ENCODE measurements at regions of chr2 and their contacts with region 1.

Region 1: DNA sequence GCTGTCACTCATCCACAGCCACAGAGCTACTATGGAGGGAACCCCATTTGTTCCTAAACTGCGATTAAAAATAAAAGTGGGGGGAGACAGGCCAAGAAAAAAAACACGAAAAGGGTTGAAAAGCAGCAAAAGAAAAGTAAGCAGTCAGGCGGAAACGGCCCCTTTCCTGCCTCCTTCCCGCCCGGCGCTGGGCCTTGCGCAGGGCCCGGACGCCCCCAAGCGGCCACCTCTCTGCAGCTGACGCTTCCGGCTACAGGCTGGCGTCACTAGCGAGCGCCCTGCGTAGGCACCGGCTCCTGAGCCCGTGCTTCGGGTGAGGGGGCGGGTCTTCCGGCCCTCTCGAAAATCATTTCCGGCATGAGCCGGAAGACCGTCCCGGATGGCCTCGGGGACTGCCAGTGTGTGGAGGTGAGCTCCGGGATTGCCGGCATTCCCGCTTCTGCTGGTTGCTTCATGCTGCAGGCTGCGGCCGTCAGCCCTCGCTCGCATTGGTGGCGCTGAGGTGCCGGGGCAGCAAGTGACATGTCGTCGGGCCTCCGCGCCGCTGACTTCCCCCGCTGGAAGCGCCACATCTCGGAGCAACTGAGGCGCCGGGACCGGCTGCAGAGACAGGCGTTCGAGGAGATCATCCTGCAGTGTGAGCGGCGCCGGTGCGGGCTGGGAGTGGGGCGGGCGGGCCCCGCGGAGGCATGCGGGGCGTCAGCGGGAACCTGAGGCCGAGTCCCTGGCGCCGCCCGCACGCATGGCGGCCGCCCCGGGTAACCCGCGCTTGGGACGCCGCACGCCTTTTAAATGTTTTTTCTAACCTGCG is at the start of gene ATG16L1:
- DNase-seq: peak; percentile 98
- H3K4me3 Mint-ChIP-seq: peak within 1 kb of the TSS; percentile 91
- H3K27ac Mint-ChIP-seq: peak within 1 kb of the TSS; percentile 96
- H3K4me1 Mint-ChIP-seq: peaks cover 68% of the 10 kb centered on the region
- H3K27me3 Mint-ChIP-seq: no peaks in the 10 kb centered on the region
- total RNA-seq, gene ATG16L1: 27.0 to 30.5 TPM

Region 2: DNA sequence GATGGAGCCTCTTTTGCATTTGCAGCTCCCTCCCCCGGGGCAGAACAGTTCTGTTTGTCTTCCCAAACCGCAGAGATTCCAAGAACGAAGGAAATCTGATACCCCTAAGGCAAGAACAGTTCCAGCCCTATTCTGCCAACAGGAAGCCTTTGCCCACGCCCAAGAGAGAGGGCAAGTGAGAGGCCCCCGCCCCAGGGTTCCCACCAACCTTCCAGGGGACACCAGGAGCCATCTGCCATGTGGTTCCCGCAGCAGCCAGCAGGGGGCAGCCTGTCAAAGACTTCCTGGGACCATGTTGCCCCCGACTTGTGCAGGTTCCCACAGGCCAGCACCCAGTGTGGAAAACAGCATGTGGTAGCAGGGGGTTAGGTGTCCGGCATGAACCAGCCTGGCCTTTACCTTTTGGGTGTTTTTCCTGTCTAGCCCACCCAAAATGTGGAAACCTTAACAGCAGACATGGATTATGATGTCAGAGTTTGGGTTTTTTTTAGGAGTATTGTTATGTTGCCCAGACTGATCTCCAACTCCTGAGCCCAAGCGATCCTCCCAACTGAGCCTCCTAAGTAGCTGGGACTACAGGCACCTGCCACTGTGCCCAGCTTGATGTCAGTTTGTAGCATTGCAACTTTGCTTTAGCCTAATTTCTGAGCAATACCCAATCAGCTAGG is 639.8 kb before region 1 on chr2:
- CTCF ChIA-PET with region 1: interaction called, 4 read pairs
- POLR2A ChIA-PET with region 1: no interaction called
- intact Hi-C with region 1: loop called (anchors 1 kb)
- DNase-seq: peak; percentile 79
- H3K4me3 Mint-ChIP-seq: no peak overlapping the region
- H3K27ac Mint-ChIP-seq: no peak overlapping the region
- H3K4me1 Mint-ChIP-seq: no peaks in the 10 kb centered on the region
- H3K27me3 Mint-ChIP-seq: no peaks in the 10 kb centered on the region

Region 3: GRCh38 chr2:232761301-232761907 is 490.1 kb before region 1 on chr2:
- CTCF ChIA-PET with region 1: no interaction called
- POLR2A ChIA-PET with region 1: no interaction called
- intact Hi-C with region 1: loop called (anchors 2 kb)
- DNase-seq: peak; percentile 37
- H3K4me3 Mint-ChIP-seq: no peak overlapping the region
- H3K27ac Mint-ChIP-seq: no peak overlapping the region
- H3K4me1 Mint-ChIP-seq: peaks cover 16% of the 10 kb centered on the region
- H3K27me3 Mint-ChIP-seq: no peaks in the 10 kb centered on the region

Region 4: GRCh38 chr2:232854082-232854481 is 397.4 kb before region 1 on chr2:
- CTCF ChIA-PET with region 1: interaction called, 4 read pairs
- POLR2A ChIA-PET with region 1: no interaction called
- intact Hi-C with region 1: loop called (anchors 1 kb)
- DNase-seq: no peak
- H3K4me3 Mint-ChIP-seq: no peak overlapping the region
- H3K27ac Mint-ChIP-seq: no peak overlapping the region
- H3K4me1 Mint-ChIP-seq: peaks cover 4% of the 10 kb centered on the region
- H3K27me3 Mint-ChIP-seq: no peaks in the 10 kb centered on the region

Region 5: GRCh38 chr2:233061591-233062450 is 189.7 kb before region 1 on chr2:
- CTCF ChIA-PET with region 1: interaction called, 31 read pairs
- POLR2A ChIA-PET with region 1: interaction called, 23 read pairs
- intact Hi-C with region 1: loop called (anchors 1 kb)
- DNase-seq: peak; percentile 74
- H3K4me3 Mint-ChIP-seq: peak overlapping the region; percentile 98
- H3K27ac Mint-ChIP-seq: peak overlapping the region; percentile 99
- H3K4me1 Mint-ChIP-seq: peaks cover 43% of the 10 kb centered on the region
- H3K27me3 Mint-ChIP-seq: no peaks in the 10 kb centered on the region

Region 6: GRCh38 chr2:233142355-233142897 is 109.1 kb before region 1 on chr2:
- CTCF ChIA-PET with region 1: interaction called, 3 read pairs
- POLR2A ChIA-PET with region 1: no interaction called
- intact Hi-C with region 1: loop called (anchors 2 kb)
- DNase-seq: peak; percentile 64
- H3K4me3 Mint-ChIP-seq: no peak overlapping the region
- H3K27ac Mint-ChIP-seq: peak overlapping the region; percentile 67
- H3K4me1 Mint-ChIP-seq: peaks cover 31% of the 10 kb centered on the region
- H3K27me3 Mint-ChIP-seq: no peaks in the 10 kb centered on the region

Region 7: GRCh38 chr2:233267516-233268245 is 16.2 kb after region 1 on chr2:
- CTCF ChIA-PET with region 1: interaction called, 16 read pairs
- POLR2A ChIA-PET with region 1: interaction called, 20 read pairs
- intact Hi-C with region 1: loop called (anchors 1 kb)
- DNase-seq: peak; percentile 88
- H3K4me3 Mint-ChIP-seq: peak overlapping the region; percentile 66
- H3K27ac Mint-ChIP-seq: peak overlapping the region; percentile 94
- H3K4me1 Mint-ChIP-seq: peaks cover 63% of the 10 kb centered on the region
- H3K27me3 Mint-ChIP-seq: no peaks in the 10 kb centered on the region